ENCODE measurements at regions of chr22 and their contacts with region 1.

Region 1: DNA sequence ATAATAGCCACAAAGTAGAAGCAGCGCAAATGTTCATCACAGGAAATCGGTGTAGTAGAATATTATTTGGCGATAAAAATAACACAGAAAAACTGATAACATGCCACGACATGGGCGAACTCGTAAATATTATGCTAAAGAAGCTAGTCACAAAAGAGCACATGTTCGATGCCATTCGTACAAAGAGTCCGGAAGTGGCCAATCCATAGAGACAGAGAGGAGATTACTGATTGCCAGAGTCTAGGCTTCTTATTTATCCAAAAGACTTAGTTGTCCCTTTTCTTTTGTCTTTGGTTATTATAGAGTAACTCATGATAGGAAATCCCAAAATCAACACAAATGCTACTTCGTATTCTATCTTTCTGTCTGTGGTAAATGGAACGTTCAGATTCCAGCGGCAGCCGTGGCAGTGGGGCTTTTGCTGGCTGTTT is 56.5 kb downstream of the MED15 start:
- DNase-seq: no peak
- H3K4me3 Mint-ChIP-seq: no peak overlapping the region
- H3K27ac Mint-ChIP-seq: peak overlapping the region; percentile 30
- H3K4me1 Mint-ChIP-seq: peaks cover 65% of the 10 kb centered on the region
- H3K27me3 Mint-ChIP-seq: no peaks in the 10 kb centered on the region

Region 2: GRCh38 chr22:20238536-20238900 is 325.4 kb before region 1 on chr22:
- intact Hi-C with region 1: no loop called
- DNase-seq: peak; percentile 87
- H3K4me3 Mint-ChIP-seq: no peak overlapping the region
- H3K27ac Mint-ChIP-seq: peak overlapping the region; percentile 65
- H3K4me1 Mint-ChIP-seq: peaks cover 8% of the 10 kb centered on the region
- H3K27me3 Mint-ChIP-seq: no peaks in the 10 kb centered on the region

Region 3: DNA sequence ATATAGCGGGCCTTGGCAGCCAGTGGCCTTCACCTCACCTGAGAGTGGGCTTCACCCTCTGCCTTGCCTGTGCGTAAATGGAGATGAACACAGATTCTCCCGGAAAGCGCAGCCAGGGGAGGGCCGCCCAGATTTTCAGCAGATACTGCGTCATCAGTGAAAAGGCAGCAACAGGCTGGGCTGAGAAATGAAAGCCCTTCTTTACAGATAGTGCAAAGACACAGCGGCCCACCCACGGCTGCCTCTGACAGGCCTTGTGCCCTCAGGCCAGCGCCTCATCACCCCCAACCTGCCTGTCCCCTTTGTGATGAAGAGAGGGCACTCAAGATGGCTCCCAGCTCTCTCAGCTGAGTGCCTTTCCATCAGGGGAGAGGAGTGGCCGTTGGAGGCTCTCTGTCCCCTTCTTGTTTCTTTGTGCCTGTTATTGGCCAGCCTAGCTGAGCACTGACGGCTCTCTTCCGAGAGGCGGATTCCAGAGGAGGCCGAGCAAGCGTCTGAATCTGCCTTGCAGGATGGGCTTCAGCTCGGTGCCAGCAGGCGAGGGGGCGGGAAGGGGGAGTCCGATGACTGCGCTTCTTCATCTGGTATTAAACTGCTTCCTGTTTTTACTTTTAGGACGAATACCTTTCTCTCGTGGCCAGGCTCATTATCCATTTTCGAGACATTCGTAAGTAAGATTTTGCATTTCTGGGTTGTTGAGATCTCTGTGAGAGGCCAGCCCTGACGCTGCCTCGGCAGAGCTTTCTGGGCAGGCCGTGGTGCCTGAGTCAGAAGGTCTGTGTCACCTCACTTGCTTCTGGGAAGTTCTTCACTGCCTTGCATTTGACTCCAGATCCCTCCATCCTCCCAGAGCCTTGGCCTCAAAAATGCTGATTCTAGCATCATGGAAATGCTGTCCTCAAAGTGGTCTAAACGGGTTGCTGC is 12.9 kb before region 1 on chr22:
- intact Hi-C with region 1: loop called (anchors 1 kb)
- DNase-seq: peak; percentile 78
- H3K4me3 Mint-ChIP-seq: peak overlapping the region; percentile 78
- H3K27ac Mint-ChIP-seq: peak overlapping the region; percentile 94
- H3K4me1 Mint-ChIP-seq: peaks cover 56% of the 10 kb centered on the region
- H3K27me3 Mint-ChIP-seq: no peaks in the 10 kb centered on the region